ENCODE measurements at regions of chr1 and their contacts with region 1.

Region 1: DNA sequence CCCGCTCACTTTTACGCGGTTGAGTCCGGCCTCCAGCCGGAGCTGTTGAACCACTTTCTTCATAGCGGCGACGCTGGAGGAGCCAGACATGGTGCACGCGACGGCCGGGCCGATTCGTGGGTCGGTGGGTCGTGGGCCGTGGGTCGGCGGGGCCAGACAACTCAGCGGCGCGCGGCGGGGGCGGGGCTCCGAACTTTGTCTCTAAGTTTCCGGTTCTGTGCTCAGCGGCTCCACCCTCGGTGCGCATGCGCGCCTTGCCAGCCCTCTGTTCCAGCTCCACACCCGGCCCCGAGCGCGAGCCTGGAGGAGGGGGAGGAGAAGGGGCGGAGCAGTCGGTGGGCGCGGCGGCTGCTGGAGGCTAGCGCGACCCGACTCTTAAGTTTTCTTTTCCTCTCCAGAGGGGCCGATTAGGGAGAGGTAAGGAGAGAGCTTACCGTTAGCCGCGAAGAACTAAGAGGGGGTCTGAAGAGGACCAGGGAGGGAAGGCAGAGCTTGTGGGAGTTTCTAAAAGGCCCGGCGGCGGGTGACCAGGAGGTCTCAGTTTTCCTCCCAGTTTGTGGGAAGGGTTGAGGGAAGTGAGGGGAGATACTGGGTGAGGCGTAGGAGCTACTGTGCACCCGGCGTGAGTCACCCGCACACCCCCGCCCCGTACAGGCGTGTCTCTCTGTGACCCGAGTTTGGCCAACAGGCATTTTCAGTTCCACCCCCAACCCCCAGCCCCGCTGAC is at the starts of genes GNG5 and SPATA1:
- DNase-seq: peak; percentile 95 to 98 (median 96)
- ATAC-seq: peak; percentile 90
- H3K4me3 ChIP-seq: peak within 1 kb of the TSS; percentile 69
- H3K27ac ChIP-seq: peak within 1 kb of the TSS; percentile 97
- H3K4me1 ChIP-seq: peaks cover 4 to 10% of the 10 kb centered on the region in 2 experiments; a peak in 4 of 5 replicates
- H3K27me3 ChIP-seq: no peaks in the 10 kb centered on the region
- CTCF ChIP-seq: no peak
- EP300 ChIP-seq: peak; percentile 61
- POLR2A ChIP-seq: peak; percentile 98
- RAD21 ChIP-seq: peak in 1 of 2 experiments; percentile 27; a peak in 2 of 4 replicates
- polyA plus RNA-seq, gene GNG5: 242 to 243 TPM
- polyA plus RNA-seq, gene SPATA1: 1.1 TPM

Region 2: DNA sequence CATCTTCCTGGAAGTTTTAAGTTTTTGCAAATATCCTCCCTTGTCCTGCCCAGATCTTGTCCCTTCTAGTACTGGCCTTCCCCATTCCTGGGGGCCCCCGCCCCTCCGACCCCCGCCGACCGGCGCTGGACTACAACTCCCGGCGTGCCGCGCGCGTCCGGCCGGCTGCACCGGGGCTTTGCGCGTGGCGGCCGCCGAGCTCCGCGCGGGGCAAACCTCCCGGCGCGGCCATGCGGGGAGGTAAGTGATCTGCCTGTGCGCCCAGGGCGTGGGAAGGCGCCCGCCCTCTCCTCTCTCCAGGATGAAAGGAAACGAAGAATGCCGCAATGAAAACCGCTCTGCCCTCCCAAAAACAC is 207.9 kb before region 1 on chr1:
- CTCF ChIA-PET with region 1: no interaction called
- POLR2A ChIA-PET with region 1: interaction called, 3 read pairs
- in situ Hi-C with region 1: no loop called
- intact Hi-C with region 1: loop called (anchors 10 kb)
- DNase-seq: peak; percentile 64 to 79 (median 72)
- ATAC-seq: peak; percentile 91
- H3K4me3 ChIP-seq: peak overlapping the region; percentile 69
- H3K27ac ChIP-seq: peak overlapping the region; percentile 83
- H3K4me1 ChIP-seq: peaks cover 14 to 31% of the 10 kb centered on the region in 2 experiments
- H3K27me3 ChIP-seq: no peaks in the 10 kb centered on the region
- CTCF ChIP-seq: no peak
- EP300 ChIP-seq: no peak
- POLR2A ChIP-seq: peak; percentile 83
- RAD21 ChIP-seq: no peak

Region 3: DNA sequence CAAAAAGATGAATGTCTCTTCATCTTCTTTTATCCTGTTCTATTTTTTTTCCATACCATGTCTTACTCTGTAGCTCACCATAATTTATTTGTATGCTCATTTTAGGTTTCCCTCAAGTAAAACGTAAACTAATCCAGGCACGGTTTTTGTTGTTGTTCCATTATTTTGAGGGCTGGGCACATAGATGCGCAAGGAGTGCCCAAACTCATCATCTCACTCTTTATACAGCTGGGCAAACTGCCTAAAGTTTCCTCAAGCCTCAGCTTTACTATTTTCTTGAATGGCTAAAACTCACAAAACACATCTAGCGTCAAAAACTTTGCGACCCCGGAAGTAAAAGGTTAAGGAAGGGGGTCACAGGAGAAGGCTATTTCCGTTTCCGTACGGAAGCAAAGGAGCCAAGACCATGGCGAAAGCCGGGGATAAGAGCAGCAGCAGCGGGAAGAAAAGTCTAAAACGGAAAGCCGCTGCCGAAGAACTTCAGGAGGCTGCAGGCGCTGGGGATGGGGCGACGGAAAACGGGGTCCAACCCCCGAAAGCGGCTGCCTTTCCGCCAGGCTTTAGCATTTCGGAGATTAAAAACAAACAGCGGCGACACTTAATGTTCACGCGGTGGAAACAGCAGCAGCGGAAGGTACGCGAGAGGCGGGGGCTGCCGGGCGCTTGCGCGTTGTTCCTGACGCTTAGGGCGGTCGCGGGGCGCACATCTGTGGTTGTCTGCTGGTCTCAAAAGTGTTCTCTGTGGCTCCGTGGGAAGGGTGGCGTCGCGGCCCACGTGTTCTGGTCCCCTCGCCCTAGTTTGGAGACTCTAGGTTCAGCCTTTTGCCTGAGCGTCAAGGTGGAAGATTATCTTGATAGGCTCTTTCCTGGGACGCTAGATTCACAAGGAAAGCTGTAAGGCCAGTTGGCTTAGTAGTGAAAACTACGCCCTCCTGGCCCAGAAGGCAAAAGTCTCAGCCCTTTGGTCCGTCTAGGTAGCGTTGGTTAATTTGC is 27.0 kb before region 1 on chr1 and contains the start of gene RPF1:
- CTCF ChIA-PET with region 1: interaction called, 7 read pairs
- POLR2A ChIA-PET with region 1: interaction called, 34 read pairs
- in situ Hi-C with region 1: no loop called
- intact Hi-C with region 1: loop called (anchors 1 kb)
- DNase-seq: peak; percentile 63 to 89 (median 74)
- ATAC-seq: peak; percentile 97
- H3K4me3 ChIP-seq: peak within 1 kb of the TSS; percentile 89
- H3K27ac ChIP-seq: peak within 1 kb of the TSS; percentile 88
- H3K4me1 ChIP-seq: peaks cover 0 to 5% of the 10 kb centered on the region in 2 experiments; a peak in 2 of 5 replicates
- H3K27me3 ChIP-seq: no peaks in the 10 kb centered on the region; a peak in 2 of 5 replicates
- CTCF ChIP-seq: no peak; a peak in 1 of 6 replicates
- EP300 ChIP-seq: no peak
- POLR2A ChIP-seq: peak; percentile 97
- RAD21 ChIP-seq: peak in 1 of 2 experiments; percentile 13; a peak in 1 of 4 replicates
- polyA plus RNA-seq, gene RPF1: 68.0 to 84.7 TPM

Region 4: GRCh38 chr1:84573967-84574842 is 68.0 kb after region 1 on chr1 and contains the start of gene CTBS:
- CTCF ChIA-PET with region 1: no interaction called
- POLR2A ChIA-PET with region 1: interaction called, 5 read pairs
- in situ Hi-C with region 1: no loop called
- intact Hi-C with region 1: loop called (anchors 2 kb)
- DNase-seq: peak; percentile 92 to 99 (median 98)
- ATAC-seq: peak; percentile 97
- H3K4me3 ChIP-seq: peak within 1 kb of the TSS; percentile 90
- H3K27ac ChIP-seq: peak within 1 kb of the TSS; percentile 98
- H3K4me1 ChIP-seq: peaks cover 8 to 9% of the 10 kb centered on the region in 2 experiments; a peak in 4 of 5 replicates
- H3K27me3 ChIP-seq: no peaks in the 10 kb centered on the region
- CTCF ChIP-seq: no peak
- EP300 ChIP-seq: no peak
- POLR2A ChIP-seq: peak; percentile 91
- RAD21 ChIP-seq: no peak
- polyA plus RNA-seq, gene CTBS: 3.0 to 4.7 TPM

Region 5: DNA sequence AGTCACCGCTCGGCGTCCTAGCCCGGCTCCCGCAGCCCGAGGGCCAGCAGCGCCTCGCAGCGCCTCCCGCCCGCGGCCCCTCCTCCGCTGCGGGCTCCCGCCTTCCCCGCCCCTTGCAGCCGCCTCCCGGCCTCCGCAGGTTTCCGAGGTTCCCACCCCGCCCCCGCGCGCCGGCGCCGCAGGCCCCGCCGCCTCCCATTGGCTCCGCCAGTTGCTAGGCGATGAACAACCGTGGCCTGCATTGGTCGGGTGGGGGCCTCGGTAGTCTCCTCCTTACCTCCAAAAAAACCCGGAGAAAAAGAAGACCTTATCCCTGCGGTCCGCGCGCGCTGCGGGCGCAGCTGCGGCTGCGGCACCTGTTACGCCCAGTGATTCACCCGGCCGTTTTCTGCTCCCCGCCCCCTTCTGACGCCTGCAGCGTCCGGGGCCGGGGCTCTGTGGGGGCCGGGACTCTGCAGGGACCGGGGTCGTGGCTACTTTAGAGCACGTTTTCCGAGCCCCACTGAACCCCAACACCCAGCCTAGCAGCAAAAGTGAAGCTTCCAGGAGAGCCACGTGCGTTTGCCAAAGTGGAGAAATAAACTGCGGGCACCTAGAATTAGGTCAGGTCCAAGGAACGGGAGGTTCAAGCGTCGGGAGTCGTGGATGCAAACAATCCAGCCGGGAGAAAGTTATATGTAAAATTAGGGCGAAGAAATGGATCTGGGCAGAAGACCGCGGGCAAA is 184.4 kb after region 1 on chr1 and contains the start of gene SSX2IP:
- CTCF ChIA-PET with region 1: no interaction called
- POLR2A ChIA-PET with region 1: no interaction called
- in situ Hi-C with region 1: no loop called
- intact Hi-C with region 1: loop called (anchors 5 kb)
- DNase-seq: peak; percentile 98 to 100 (median 100)
- ATAC-seq: peak; percentile 82
- H3K4me3 ChIP-seq: peak within 1 kb of the TSS; percentile 76
- H3K27ac ChIP-seq: peak within 1 kb of the TSS; percentile 92
- H3K4me1 ChIP-seq: peaks cover 17 to 33% of the 10 kb centered on the region in 2 experiments
- H3K27me3 ChIP-seq: no peaks in the 10 kb centered on the region; a peak in 1 of 5 replicates
- CTCF ChIP-seq: no peak; a peak in 2 of 6 replicates
- EP300 ChIP-seq: peak; percentile 41
- POLR2A ChIP-seq: peak; percentile 53
- RAD21 ChIP-seq: no peak
- polyA plus RNA-seq, gene SSX2IP: 20.6 to 25.8 TPM